ENCODE measurements at regions of chr3 and their contacts with region 1.

Region 1: DNA sequence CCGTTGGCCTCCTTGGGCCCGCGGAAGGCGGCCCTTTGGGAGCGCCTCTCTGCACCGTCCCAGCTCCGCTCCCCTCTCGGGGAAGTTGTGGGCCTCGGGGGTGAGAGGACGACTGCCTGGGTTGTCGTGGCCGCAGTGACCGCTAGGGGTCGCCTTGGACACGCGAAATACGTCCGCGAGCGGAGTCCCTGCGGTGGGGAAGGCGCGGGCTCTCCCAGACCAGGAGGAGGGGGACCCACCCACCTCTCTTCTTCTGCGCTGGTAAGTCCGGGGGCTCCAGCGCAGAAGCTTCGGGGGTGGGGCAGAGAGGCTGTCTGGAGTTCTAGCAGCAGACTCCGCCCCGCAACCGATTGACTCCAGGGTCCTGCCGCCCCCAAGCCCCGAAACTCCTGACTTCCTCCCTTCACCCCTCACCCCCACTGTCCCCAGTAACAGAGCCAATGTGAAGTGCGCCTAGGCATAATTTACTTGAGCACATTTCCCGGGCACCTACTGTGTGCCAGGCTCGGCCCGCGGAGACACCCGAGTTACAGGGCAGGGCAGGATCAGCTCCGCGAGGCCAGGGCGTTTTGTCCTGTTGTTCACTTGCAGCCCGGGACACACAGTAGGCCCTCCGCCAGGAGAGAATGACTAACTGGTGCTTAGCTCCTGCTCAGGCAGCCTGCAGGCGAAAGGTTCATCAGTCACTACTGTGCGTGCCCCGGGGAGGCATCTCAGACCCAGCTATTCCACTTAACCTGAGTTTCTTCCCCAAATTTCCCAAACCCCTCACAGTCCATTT is 32.8 kb downstream of the DNASE1L3 start:
- DNase-seq: peak; percentile 84 to 91
- ATAC-seq: peak; percentile 93 to 98 (median 97)
- H3K4me3 ChIP-seq: peak overlapping the region; percentile 27
- H3K4me3 Mint-ChIP-seq: peak overlapping the region; percentile 56
- H3K27ac ChIP-seq: no peak overlapping the region
- H3K27ac Mint-ChIP-seq: no peak overlapping the region
- H3K4me1 ChIP-seq: peaks cover 21% of the 10 kb centered on the region
- H3K4me1 Mint-ChIP-seq: peaks cover 0 to 12% of the 10 kb centered on the region in 2 donors
- H3K27me3 ChIP-seq: peaks cover 2% of the 10 kb centered on the region
- H3K27me3 Mint-ChIP-seq: peaks cover 0 to 10% of the 10 kb centered on the region in 2 donors
- CTCF ChIP-seq: peak; percentile 96

Region 2: GRCh38 chr3:58217209-58217811 is 39.4 kb after region 1 on chr3:
- intact Hi-C with region 1: loop called (anchors 2 kb)
- DNase-seq: peak; percentile 33 to 81
- ATAC-seq: peak; percentile 81 to 90 (median 83)
- H3K4me3 ChIP-seq: no peak overlapping the region
- H3K4me3 Mint-ChIP-seq: peak overlapping the region; percentile 60
- H3K27ac ChIP-seq: no peak overlapping the region
- H3K27ac Mint-ChIP-seq: peak overlapping the region in 1 of 2 donors; percentile 71
- H3K4me1 ChIP-seq: peaks cover 23% of the 10 kb centered on the region
- H3K4me1 Mint-ChIP-seq: peaks cover 8 to 14% of the 10 kb centered on the region in 2 donors
- H3K27me3 ChIP-seq: no peaks in the 10 kb centered on the region
- H3K27me3 Mint-ChIP-seq: peaks cover 0 to 2% of the 10 kb centered on the region in 2 donors
- CTCF ChIP-seq: peak; percentile 81

Measured in natural killer cell (primary cell).